ENCODE measurements at regions of chr17 and their contacts with region 1.

Region 1: GRCh38 chr17:74368092-74369081 is 1.1 kb downstream of the GPR142 start:
- DNase-seq: peak; percentile 81
- H3K4me3 Mint-ChIP-seq: no peak overlapping the region
- H3K27ac Mint-ChIP-seq: no peak overlapping the region
- H3K4me1 Mint-ChIP-seq: peaks cover 14% of the 10 kb centered on the region
- H3K27me3 Mint-ChIP-seq: no peaks in the 10 kb centered on the region

Region 2: DNA sequence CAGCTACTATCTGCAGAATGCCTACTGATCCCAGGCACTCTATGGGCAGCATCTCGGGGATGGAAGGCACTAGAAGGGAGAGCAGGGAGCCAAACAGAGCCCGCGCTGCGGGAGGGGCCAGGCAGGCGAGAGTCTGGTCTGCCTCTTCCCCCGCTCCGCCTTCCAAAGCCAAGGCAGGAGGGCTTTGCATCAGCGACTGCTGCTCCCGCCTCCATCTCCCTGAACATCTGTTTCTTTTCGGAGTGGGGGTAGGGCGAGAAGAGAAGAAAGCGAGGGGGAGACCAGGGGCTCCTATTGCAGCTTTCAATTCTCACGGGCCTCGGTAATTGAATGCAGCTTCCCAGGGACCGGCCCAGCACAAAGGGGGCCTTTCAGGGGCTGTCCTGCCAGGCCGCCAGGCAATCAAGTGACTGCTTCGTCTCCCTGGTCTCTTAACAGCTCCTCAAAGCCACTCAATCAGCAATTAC is 1025.2 kb before region 1 on chr17:
- CTCF ChIA-PET with region 1: no interaction called
- intact Hi-C with region 1: no loop called
- DNase-seq: no peak
- H3K4me3 Mint-ChIP-seq: no peak overlapping the region
- H3K27ac Mint-ChIP-seq: no peak overlapping the region
- H3K4me1 Mint-ChIP-seq: no peaks in the 10 kb centered on the region
- H3K27me3 Mint-ChIP-seq: no peaks in the 10 kb centered on the region

Region 3: DNA sequence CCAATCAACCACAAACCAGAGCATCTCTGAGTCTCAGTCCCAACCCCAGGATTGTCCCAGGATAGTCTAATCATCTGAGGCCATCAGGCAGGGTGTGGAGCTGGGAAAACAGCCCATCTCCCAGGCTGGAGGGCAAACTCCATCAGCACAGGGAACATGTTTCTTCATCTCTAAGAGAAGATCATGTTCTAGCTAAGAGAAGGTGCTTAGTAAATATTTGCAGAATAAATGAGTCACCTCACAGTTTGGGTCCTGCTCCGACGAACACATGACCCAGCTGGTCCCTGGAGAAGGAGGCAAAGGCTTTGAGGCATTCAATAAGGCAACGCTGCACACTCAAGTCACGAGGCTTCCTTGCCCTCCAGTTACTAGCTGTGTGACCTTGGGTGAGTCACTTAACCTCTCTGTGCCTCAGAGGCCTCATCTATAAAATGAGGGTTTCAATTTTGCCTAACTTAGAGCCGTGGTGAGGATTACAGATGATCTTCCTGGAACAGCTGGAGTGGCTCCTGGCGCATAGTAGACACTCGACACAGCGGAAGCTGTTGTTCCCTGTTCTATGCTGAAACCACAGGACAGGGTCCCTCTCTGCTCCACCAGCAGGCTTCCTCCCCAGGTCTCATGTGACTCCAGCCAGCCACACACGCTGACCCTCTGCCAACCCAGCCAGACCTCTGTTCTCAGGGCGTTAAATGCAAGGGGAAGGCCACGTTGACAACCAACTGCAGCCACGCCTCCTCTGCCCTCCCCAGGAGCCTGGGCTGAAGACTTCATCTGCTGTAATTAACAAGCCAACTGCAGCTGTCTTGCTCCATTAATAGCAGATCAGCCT is 175.2 kb before region 1 on chr17:
- CTCF ChIA-PET with region 1: no interaction called
- intact Hi-C with region 1: no loop called
- DNase-seq: no peak
- H3K4me3 Mint-ChIP-seq: no peak overlapping the region
- H3K27ac Mint-ChIP-seq: no peak overlapping the region
- H3K4me1 Mint-ChIP-seq: no peaks in the 10 kb centered on the region
- H3K27me3 Mint-ChIP-seq: peaks cover 15% of the 10 kb centered on the region

Region 4: GRCh38 chr17:74354123-74354522 is 14.3 kb before region 1 on chr17:
- CTCF ChIA-PET with region 1: interaction called, 14 read pairs
- intact Hi-C with region 1: no loop called
- DNase-seq: peak; percentile 79
- H3K4me3 Mint-ChIP-seq: no peak overlapping the region
- H3K27ac Mint-ChIP-seq: no peak overlapping the region
- H3K4me1 Mint-ChIP-seq: peaks cover 6% of the 10 kb centered on the region
- H3K27me3 Mint-ChIP-seq: peaks cover 44% of the 10 kb centered on the region

Region 5: GRCh38 chr17:74394977-74395376 is 26.6 kb after region 1 on chr17:
- CTCF ChIA-PET with region 1: interaction called, 10 read pairs
- intact Hi-C with region 1: no loop called
- DNase-seq: no peak
- H3K4me3 Mint-ChIP-seq: no peak overlapping the region
- H3K27ac Mint-ChIP-seq: no peak overlapping the region
- H3K4me1 Mint-ChIP-seq: no peaks in the 10 kb centered on the region
- H3K27me3 Mint-ChIP-seq: no peaks in the 10 kb centered on the region

Region 6: GRCh38 chr17:74457146-74457819 is 88.9 kb after region 1 on chr17:
- CTCF ChIA-PET with region 1: interaction called, 97 read pairs
- intact Hi-C with region 1: loop called (anchors 1 kb)
- DNase-seq: peak; percentile 81
- H3K4me3 Mint-ChIP-seq: no peak overlapping the region
- H3K27ac Mint-ChIP-seq: no peak overlapping the region
- H3K4me1 Mint-ChIP-seq: peaks cover 4% of the 10 kb centered on the region
- H3K27me3 Mint-ChIP-seq: peaks cover 8% of the 10 kb centered on the region

Region 7: GRCh38 chr17:74528491-74529199 is 160.3 kb after region 1 on chr17:
- CTCF ChIA-PET with region 1: interaction called, 9 read pairs
- intact Hi-C with region 1: loop called (anchors 2 kb)
- DNase-seq: no peak
- H3K4me3 Mint-ChIP-seq: no peak overlapping the region
- H3K27ac Mint-ChIP-seq: no peak overlapping the region
- H3K4me1 Mint-ChIP-seq: peaks cover 2% of the 10 kb centered on the region
- H3K27me3 Mint-ChIP-seq: peaks cover 26% of the 10 kb centered on the region